Upper lobe of right lung (tissue), 1 donor: ENCODE measurements at regions of chr9 and their contacts with region 1.

Region 1: DNA sequence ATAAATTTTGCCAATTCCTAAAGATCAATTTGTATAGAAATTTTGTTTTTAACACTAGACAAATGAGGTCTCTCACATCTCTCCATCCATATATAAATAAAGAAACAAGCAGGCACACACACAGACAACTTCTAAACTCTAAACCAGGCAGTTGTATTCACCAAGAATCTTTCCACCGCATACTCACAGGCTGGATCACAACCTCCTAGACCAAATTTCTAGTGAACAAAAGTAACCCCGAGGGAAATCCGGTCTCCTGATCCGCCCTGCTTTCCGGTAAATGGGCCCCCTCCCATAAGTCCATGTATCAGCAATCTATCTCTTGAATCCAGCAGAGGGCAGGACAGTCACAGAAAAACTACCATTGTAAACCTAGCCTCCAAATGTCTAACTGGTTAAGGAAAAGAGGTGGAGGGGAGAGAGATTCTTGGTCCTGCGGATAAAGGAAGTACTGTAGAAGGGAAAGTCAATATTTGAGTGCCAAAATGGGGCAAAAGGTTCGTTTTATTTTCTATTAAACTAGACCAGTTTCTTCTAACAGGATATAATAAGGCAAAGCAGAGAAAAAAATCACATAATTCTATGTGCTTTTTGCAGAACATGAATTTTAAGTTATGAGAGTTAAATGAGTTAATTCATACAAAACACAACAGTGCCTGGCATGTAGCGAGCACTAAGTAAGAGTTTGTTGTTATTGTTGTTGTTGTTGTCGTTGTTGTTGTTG is 4.8 kb upstream of the SMU1 start:
- DNase-seq: no peak
- ATAC-seq: peak; percentile 77
- H3K4me3 ChIP-seq: no peak overlapping the region
- H3K27ac ChIP-seq: peak overlapping the region; percentile 52
- H3K4me1 ChIP-seq: peaks cover 13% of the 10 kb centered on the region
- H3K27me3 ChIP-seq: no peaks in the 10 kb centered on the region
- CTCF ChIP-seq: peak; percentile 76

Region 2: GRCh38 chr9:33170464-33171415 is 89.5 kb after region 1 on chr9:
- intact Hi-C with region 1: loop called (anchors 10 kb)
- DNase-seq: peak; percentile 77
- ATAC-seq: no peak
- H3K4me3 ChIP-seq: no peak overlapping the region
- H3K27ac ChIP-seq: no peak overlapping the region
- H3K4me1 ChIP-seq: peaks cover 17% of the 10 kb centered on the region
- H3K27me3 ChIP-seq: no peaks in the 10 kb centered on the region
- CTCF ChIP-seq: peak; percentile 52

Region 3: GRCh38 chr9:33225319-33226149 is 144.2 kb after region 1 on chr9:
- intact Hi-C with region 1: loop called (anchors 5 kb)
- DNase-seq: no peak
- ATAC-seq: peak; percentile 47
- H3K4me3 ChIP-seq: no peak overlapping the region
- H3K27ac ChIP-seq: no peak overlapping the region
- H3K4me1 ChIP-seq: peaks cover 9% of the 10 kb centered on the region
- H3K27me3 ChIP-seq: no peaks in the 10 kb centered on the region
- CTCF ChIP-seq: peak; percentile 81